Calu3 (cell line): ENCODE measurements at regions of chr17 and their contacts with region 1.

Region 1: DNA sequence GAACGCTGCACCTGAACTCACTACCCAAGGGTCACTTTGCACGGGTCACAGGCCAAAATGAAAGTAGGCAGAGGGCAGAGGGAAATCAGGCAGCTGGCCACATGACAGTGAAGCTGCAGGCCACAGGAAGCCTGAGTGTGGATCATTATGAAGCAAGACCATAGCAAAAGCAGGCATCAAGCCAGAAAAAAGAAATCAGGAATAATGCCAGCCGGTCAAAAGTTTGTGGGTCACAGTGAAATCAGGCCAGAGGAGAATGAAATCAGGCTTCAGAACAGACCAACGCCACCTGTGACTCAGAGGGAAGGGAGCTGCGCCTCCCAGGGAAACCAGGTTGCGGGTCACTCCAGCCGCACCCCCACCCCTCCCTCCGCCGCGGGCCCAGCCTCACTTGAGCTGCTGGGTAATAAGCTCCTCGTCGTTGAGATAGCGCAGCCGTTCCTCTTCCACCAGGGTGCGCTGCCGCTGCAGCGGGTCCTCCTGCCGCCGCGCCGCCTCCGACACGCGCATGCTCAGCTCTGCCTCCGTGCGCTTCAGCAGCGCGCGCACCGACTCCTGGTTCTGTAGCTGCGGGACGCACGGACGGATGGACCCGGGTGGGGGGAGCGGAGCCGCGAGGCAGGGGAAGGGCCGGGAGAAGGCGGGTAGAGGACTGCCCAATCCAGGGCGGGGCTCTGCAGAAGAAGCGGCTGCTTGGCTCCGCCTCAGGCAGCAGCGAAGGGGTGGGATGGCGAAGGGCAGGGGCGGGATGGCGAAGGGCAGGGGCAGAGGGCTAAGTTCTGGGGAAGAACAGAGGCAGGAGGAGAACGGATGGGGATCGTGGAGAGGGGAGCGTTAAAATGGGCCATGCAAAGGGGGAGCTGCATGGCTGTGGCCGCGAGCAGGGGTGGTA is 47.7 kb downstream of the SRCIN1 start:
- DNase-seq: peak; percentile 100
- H3K4me3 Mint-ChIP-seq: peak overlapping the region; percentile 78
- H3K27ac Mint-ChIP-seq: peak overlapping the region; percentile 52
- H3K4me1 Mint-ChIP-seq: peaks cover 43% of the 10 kb centered on the region
- H3K27me3 Mint-ChIP-seq: peaks cover 10% of the 10 kb centered on the region
- CTCF ChIP-seq: peak; percentile 100

Region 2: GRCh38 chr17:38341035-38341721 is 216.9 kb before region 1 on chr17:
- CTCF ChIA-PET with region 1: interaction called, 11 read pairs
- intact Hi-C with region 1: no loop called
- DNase-seq: peak; percentile 84
- H3K4me3 Mint-ChIP-seq: no peak overlapping the region
- H3K27ac Mint-ChIP-seq: no peak overlapping the region
- H3K4me1 Mint-ChIP-seq: peaks cover 8% of the 10 kb centered on the region
- H3K27me3 Mint-ChIP-seq: peaks cover 77% of the 10 kb centered on the region
- CTCF ChIP-seq: no peak

Region 3: GRCh38 chr17:38572669-38573365 is 14.7 kb after region 1 on chr17:
- CTCF ChIA-PET with region 1: interaction called, 56 read pairs
- intact Hi-C with region 1: no loop called
- DNase-seq: peak; percentile 75
- H3K4me3 Mint-ChIP-seq: peak overlapping the region; percentile 24
- H3K27ac Mint-ChIP-seq: no peak overlapping the region
- H3K4me1 Mint-ChIP-seq: peaks cover 10% of the 10 kb centered on the region
- H3K27me3 Mint-ChIP-seq: peaks cover 100% of the 10 kb centered on the region
- CTCF ChIP-seq: no peak

Region 4: DNA sequence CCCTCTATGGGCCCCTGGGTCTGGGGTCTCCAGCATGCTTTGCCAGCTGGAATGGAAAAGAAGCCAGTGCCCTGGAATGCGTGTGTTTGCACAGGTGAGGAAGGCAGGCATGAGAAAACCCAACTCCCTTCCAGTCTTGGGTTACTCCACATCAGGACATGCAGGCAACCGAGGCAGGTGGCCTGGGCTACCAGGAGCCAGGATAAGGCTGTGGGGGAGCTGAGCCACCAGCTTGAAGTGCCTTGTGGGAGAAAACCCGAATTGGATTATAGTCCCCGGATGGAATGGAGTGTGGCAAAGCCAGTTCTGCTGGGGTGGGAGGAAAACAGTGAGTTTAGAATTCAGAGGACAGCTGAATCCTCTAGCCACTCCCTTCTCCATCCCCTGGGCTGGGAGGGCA is 40.5 kb after region 1 on chr17:
- CTCF ChIA-PET with region 1: interaction called, 103 read pairs
- intact Hi-C with region 1: no loop called
- DNase-seq: peak; percentile 98
- H3K4me3 Mint-ChIP-seq: no peak overlapping the region
- H3K27ac Mint-ChIP-seq: no peak overlapping the region
- H3K4me1 Mint-ChIP-seq: peaks cover 21% of the 10 kb centered on the region
- H3K27me3 Mint-ChIP-seq: peaks cover 99% of the 10 kb centered on the region
- CTCF ChIP-seq: no peak

Region 5: GRCh38 chr17:38628441-38628840 is 70.4 kb after region 1 on chr17:
- CTCF ChIA-PET with region 1: interaction called, 10 read pairs
- intact Hi-C with region 1: no loop called
- DNase-seq: peak; percentile 61
- H3K4me3 Mint-ChIP-seq: no peak overlapping the region
- H3K27ac Mint-ChIP-seq: no peak overlapping the region
- H3K4me1 Mint-ChIP-seq: no peaks in the 10 kb centered on the region
- H3K27me3 Mint-ChIP-seq: peaks cover 13% of the 10 kb centered on the region
- CTCF ChIP-seq: no peak

Region 6: DNA sequence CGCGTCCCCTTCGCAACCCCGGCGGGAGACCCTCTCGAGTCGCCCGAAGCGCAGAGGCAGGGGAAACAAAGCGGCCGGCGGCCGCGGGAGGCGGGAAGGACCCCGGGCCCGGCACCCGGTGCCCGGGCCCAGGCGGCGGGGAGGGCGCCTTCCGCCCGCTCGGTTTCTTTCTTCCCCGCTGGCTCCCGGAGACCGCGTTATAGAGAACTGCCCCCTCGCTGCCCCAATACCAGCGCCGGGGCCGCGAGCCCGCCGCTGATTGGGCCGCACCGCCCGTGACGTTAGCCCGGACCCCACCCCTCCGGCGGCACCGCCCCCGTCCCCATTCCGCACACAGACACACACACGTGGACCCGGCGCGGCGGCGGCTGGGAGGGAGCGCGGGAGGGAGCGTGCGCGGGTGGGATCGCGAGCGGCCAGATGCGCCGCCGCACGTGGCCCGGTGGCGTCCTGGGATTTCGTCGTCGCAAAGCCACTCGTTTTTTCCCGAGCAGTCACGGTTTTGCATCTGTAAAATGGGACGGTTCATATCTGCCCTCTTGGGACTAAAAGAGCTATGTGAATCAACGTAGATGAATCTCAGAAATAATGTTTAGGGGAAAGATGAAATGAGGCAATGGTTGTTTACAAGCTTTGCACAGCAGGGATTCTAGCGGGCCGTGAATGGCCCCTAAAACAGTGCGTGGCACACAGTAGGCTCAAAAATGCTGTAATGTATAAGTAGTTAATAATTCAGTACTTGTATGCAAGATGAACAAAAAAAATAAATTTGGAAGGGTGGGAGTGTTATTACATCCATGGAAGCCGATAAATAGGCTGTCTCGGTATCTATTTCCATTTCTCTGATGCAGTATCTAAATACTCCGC is 116.9 kb after region 1 on chr17 and contains the start of gene EPOP:
- CTCF ChIA-PET with region 1: interaction called, 496 read pairs
- intact Hi-C with region 1: no loop called
- DNase-seq: peak; percentile 100
- H3K4me3 Mint-ChIP-seq: peak within 1 kb of the TSS; percentile 66
- H3K27ac Mint-ChIP-seq: peak within 1 kb of the TSS; percentile 31
- H3K4me1 Mint-ChIP-seq: peaks cover 34% of the 10 kb centered on the region
- H3K27me3 Mint-ChIP-seq: peaks cover 72% of the 10 kb centered on the region
- CTCF ChIP-seq: no peak
- total RNA-seq, gene EPOP: 15.3 and 20.9 TPM in 2 replicates